Activated B cell treated with CpG ODN at 0.5 μM for 24 hours (primary cell): ENCODE measurements at regions of chr9 and their contacts with region 1.

Region 1: DNA sequence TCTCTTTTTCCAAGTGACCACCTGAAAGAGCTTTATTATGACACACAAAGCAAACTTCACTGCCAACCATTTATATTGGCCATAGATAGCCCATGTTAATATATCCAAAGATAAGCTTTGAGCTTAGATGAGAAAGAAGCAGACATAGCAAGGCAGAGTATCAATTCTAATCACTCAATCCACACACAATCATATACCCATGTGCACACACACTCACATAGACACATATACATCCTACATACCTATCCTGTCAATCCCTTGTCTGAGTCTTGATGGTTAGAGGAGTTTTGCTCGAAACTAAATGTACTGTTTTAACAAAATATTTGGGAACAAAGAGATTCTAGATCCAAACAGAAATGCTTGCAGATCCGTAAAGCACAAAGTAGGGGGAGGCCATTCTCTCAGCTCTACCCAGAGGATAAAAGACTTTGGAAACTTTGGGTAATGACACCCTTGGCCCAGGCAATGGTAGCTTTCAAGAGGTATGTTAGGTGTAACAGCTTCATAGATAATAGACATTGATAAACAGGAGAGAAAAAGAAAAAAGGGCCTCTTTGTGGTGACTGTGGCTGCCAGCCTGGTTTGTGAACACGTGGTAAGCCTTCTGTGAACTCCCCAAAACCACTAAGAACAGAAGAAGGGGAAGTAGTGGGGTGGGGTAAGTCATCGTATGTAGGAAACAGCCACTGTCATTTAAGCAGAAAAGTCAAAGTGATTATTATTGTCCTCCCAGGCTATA is 121.6 kb downstream of the TLR4 start:
- DNase-seq: peak; percentile 26
- ATAC-seq: peak; percentile 96
- H3K4me3 Mint-ChIP-seq: peak overlapping the region; percentile 53
- H3K27ac Mint-ChIP-seq: peak overlapping the region; percentile 22
- H3K4me1 Mint-ChIP-seq: peaks cover 32% of the 10 kb centered on the region
- H3K27me3 Mint-ChIP-seq: peaks cover 15% of the 10 kb centered on the region
- CTCF ChIP-seq: no peak

Region 2: GRCh38 chr9:117718085-117718484 is 107.7 kb before region 1 on chr9:
- CTCF ChIA-PET with region 1: no interaction called
- POLR2A ChIA-PET with region 1: no interaction called
- intact Hi-C with region 1: loop called (anchors 2 kb)
- DNase-seq: no peak
- ATAC-seq: peak; percentile 91
- H3K4me3 Mint-ChIP-seq: peak overlapping the region; percentile 46
- H3K27ac Mint-ChIP-seq: no peak overlapping the region
- H3K4me1 Mint-ChIP-seq: peaks cover 24% of the 10 kb centered on the region
- H3K27me3 Mint-ChIP-seq: peaks cover 9% of the 10 kb centered on the region
- CTCF ChIP-seq: no peak